ENCODE measurements at regions of chr1 and their contacts with region 1.

Region 1: DNA sequence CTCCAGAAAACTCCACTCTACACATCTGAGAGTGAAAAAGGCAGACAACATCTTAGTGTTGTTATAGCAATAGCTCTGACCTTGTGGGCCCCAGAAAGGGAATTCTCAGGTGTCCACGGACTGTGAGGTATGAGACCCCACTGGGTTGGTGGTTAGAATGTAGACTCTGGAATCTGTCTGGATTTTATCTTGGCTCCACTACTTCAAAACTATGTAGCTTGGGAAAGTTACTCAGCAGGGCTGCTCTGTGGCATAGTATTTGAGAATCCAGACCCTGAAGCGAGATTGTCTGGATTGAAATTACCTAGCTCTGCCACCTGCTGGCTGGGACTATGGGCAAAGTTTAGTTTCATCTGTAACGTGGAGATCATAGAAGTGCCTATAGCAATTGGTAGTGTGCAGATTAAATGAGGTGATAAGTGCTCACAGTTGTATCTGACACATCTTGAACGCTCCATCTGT is 25.8 kb downstream of the PRDM2 start:
- DNase-seq: peak in 7 of 9 donors; percentile 51 to 74 (median 66)
- ATAC-seq: peak; percentile 67
- H3K4me3 ChIP-seq: no peak overlapping the region
- H3K4me3 Mint-ChIP-seq: no peak overlapping the region
- H3K27ac ChIP-seq: peak overlapping the region; percentile 41
- H3K27ac Mint-ChIP-seq: peak overlapping the region; percentile 17 to 87 (median 34)
- H3K4me1 ChIP-seq: peaks cover 18 to 31% of the 10 kb centered on the region in 2 donors
- H3K4me1 Mint-ChIP-seq: peaks cover 28 to 93% (median 63%) of the 10 kb centered on the region in 7 donors
- H3K27me3 ChIP-seq: no peaks in the 10 kb centered on the region
- H3K27me3 Mint-ChIP-seq: no peaks in the 10 kb centered on the region

Region 2: DNA sequence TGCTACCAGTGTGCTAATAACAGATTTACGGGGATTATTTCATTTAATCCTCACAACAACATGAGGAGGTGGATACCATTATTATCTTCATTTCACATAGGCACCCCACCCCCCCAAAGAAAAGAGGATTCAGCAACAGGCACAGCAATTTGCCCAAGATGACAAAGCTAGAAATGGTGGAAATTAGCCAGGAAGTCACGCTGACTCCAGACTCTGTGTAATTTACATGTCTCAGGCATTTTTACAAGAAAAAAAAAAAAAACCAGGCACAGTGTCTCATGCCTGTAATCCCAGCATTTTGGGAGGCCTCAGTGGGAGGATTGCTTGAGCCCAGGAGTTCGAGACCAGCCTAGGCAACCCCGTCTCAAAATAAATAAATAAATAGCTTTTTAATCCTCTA is 63.3 kb before region 1 on chr1:
- CTCF ChIA-PET with region 1: interaction called, 39 read pairs
- POLR2A ChIA-PET with region 1: interaction called, 5 read pairs
- intact Hi-C with region 1: loop called (anchors 1 kb)
- DNase-seq: no peak
- ATAC-seq: no peak
- H3K4me3 ChIP-seq: no peak overlapping the region
- H3K4me3 Mint-ChIP-seq: no peak overlapping the region
- H3K27ac ChIP-seq: no peak overlapping the region
- H3K27ac Mint-ChIP-seq: no peak overlapping the region
- H3K4me1 ChIP-seq: no peaks in the 10 kb centered on the region
- H3K4me1 Mint-ChIP-seq: peaks cover 0 to 8% (median 0%) of the 10 kb centered on the region in 7 donors
- H3K27me3 ChIP-seq: no peaks in the 10 kb centered on the region
- H3K27me3 Mint-ChIP-seq: peaks cover 0 to 8% (median 0%) of the 10 kb centered on the region in 5 donors

Region 3: GRCh38 chr1:13699936-13700520 is 25.7 kb before region 1 on chr1 and contains the start of gene PRDM2:
- CTCF ChIA-PET with region 1: interaction called, 15 read pairs
- POLR2A ChIA-PET with region 1: interaction called, 16 read pairs
- intact Hi-C with region 1: loop called in 1 of 2 experiments (anchors 1 kb)
- DNase-seq: peak; percentile 53 to 76 (median 69)
- ATAC-seq: peak; percentile 67
- H3K4me3 ChIP-seq: peak within 1 kb of the TSS; percentile 90
- H3K4me3 Mint-ChIP-seq: peak within 1 kb of the TSS; percentile 93 to 100 (median 98)
- H3K27ac ChIP-seq: peak within 1 kb of the TSS; percentile 96
- H3K27ac Mint-ChIP-seq: peak within 1 kb of the TSS; percentile 95 to 99 (median 98)
- H3K4me1 ChIP-seq: peaks cover 27% of the 10 kb centered on the region in 2 donors
- H3K4me1 Mint-ChIP-seq: peaks cover 31 to 66% (median 53%) of the 10 kb centered on the region in 7 donors
- H3K27me3 ChIP-seq: no peaks in the 10 kb centered on the region
- H3K27me3 Mint-ChIP-seq: peaks cover 0 to 9% (median 0%) of the 10 kb centered on the region in 5 donors
- total RNA-seq, gene PRDM2: 58.3 to 142 (median 127) TPM

Region 4: GRCh38 chr1:13737398-13737797 is 11.7 kb after region 1 on chr1:
- CTCF ChIA-PET with region 1: interaction called, 3 read pairs
- POLR2A ChIA-PET with region 1: interaction called, 29 read pairs
- intact Hi-C with region 1: no loop called
- DNase-seq: no peak
- ATAC-seq: peak; percentile 30
- H3K4me3 ChIP-seq: no peak overlapping the region
- H3K4me3 Mint-ChIP-seq: peak overlapping the region in 1 of 10 donors; percentile 10
- H3K27ac ChIP-seq: peak overlapping the region; percentile 16
- H3K27ac Mint-ChIP-seq: peak overlapping the region in 8 of 9 donors; percentile 66 to 84 (median 74)
- H3K4me1 ChIP-seq: peaks cover 28 to 31% of the 10 kb centered on the region in 2 donors
- H3K4me1 Mint-ChIP-seq: peaks cover 37 to 66% (median 63%) of the 10 kb centered on the region in 7 donors
- H3K27me3 ChIP-seq: no peaks in the 10 kb centered on the region
- H3K27me3 Mint-ChIP-seq: no peaks in the 10 kb centered on the region

Region 5: DNA sequence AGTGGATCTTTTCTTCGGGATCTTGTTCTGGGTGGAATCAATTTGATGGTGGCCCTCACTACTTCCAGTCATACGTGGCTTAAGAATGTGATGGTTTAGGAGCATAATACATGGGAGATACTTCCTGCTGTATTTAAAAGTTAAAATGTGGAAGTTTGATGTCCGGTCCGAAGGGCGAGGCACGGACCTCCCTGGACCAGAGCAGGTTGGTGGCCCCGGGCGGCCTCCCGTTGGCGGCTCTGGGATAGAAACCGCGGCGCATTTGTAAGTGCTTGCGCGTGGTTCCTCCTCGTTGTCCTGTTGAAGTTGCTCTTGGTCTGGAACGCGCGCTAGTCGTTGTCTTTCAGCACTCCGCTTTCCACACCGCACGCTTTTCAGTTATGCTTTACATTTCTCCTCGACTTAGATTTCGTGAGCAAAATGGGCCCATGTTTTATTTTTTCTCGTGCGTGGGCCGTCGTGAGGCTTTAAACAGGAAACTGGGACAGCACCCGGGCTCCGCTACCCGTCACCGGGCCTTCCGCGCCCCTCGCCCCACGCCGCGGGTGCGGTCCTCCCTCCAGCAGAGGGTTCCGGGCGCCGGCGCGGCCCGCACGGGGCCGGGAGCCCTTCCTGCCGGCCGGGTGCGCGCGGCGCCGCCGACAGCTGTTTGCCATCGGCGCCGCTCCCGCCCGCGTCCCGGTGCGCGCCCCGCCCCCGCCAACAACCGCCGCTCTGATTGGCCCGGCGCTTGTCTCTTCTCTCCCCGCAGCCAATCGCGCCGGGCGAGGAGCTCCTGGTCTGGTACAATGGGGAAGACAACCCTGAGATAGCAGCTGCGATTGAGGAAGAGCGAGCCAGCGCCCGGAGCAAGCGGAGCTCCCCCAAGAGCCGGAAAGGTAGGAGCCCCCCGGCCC is 23.1 kb after region 1 on chr1:
- CTCF ChIA-PET with region 1: interaction called, 6 read pairs
- POLR2A ChIA-PET with region 1: interaction called, 206 read pairs
- intact Hi-C with region 1: no loop called
- DNase-seq: peak; percentile 94 to 97 (median 96)
- ATAC-seq: peak; percentile 95
- H3K4me3 ChIP-seq: peak overlapping the region; percentile 78
- H3K4me3 Mint-ChIP-seq: peak overlapping the region; percentile 90 to 98 (median 94)
- H3K27ac ChIP-seq: peak overlapping the region; percentile 83
- H3K27ac Mint-ChIP-seq: peak overlapping the region; percentile 91 to 97 (median 96)
- H3K4me1 ChIP-seq: peaks cover 36 to 43% of the 10 kb centered on the region in 2 donors
- H3K4me1 Mint-ChIP-seq: peaks cover 31 to 67% (median 54%) of the 10 kb centered on the region in 7 donors
- H3K27me3 ChIP-seq: no peaks in the 10 kb centered on the region
- H3K27me3 Mint-ChIP-seq: no peaks in the 10 kb centered on the region

Region 6: GRCh38 chr1:13781907-13782644 is 56.3 kb after region 1 on chr1:
- CTCF ChIA-PET with region 1: no interaction called
- POLR2A ChIA-PET with region 1: no interaction called
- intact Hi-C with region 1: no loop called
- DNase-seq: no peak
- ATAC-seq: no peak
- H3K4me3 ChIP-seq: no peak overlapping the region
- H3K4me3 Mint-ChIP-seq: no peak overlapping the region
- H3K27ac ChIP-seq: no peak overlapping the region
- H3K27ac Mint-ChIP-seq: peak overlapping the region in 8 of 9 donors; percentile 34 to 83 (median 67)
- H3K4me1 ChIP-seq: no peaks in the 10 kb centered on the region
- H3K4me1 Mint-ChIP-seq: peaks cover 36 to 81% (median 74%) of the 10 kb centered on the region in 7 donors
- H3K27me3 ChIP-seq: no peaks in the 10 kb centered on the region
- H3K27me3 Mint-ChIP-seq: no peaks in the 10 kb centered on the region

Region 7: DNA sequence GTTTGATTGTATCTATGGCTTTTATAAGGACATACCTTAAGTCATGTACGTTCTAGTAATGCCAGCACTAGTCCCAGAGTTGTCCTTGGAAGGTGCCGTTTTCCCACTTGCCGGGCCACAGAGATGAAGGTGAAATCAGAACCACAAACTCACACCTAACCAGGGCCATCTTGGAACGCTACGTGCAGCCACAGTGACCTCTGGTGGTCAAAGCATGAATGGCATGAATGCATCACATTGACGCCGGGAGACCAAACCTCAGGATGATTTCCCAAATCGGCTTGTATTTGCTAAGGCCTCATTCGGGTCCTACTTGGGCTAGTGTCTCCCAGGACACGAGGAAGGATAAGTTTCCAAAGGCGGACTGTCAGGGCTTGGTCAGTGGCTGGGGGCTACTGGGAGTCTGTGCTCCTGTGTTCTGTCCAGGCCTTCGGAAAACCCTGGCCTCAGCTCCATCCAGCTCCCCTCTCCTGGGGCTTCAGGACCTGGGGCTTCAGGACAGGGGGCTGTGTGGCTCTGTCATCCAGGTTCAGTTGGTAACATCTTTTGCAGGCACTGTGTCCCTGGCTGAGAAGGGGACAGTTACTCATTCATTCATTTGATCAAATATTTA is 234.7 kb after region 1 on chr1:
- CTCF ChIA-PET with region 1: no interaction called
- POLR2A ChIA-PET with region 1: no interaction called
- intact Hi-C with region 1: loop called in 1 of 2 experiments (anchors 1 kb)
- DNase-seq: peak; percentile 15 to 60 (median 47)
- ATAC-seq: peak; percentile 60
- H3K4me3 ChIP-seq: no peak overlapping the region
- H3K4me3 Mint-ChIP-seq: no peak overlapping the region
- H3K27ac ChIP-seq: no peak overlapping the region
- H3K27ac Mint-ChIP-seq: no peak overlapping the region
- H3K4me1 ChIP-seq: no peaks in the 10 kb centered on the region
- H3K4me1 Mint-ChIP-seq: no peaks in the 10 kb centered on the region
- H3K27me3 ChIP-seq: peaks cover 0 to 2% of the 10 kb centered on the region in 2 donors
- H3K27me3 Mint-ChIP-seq: peaks cover 0 to 55% (median 42%) of the 10 kb centered on the region in 5 donors

Region 8: DNA sequence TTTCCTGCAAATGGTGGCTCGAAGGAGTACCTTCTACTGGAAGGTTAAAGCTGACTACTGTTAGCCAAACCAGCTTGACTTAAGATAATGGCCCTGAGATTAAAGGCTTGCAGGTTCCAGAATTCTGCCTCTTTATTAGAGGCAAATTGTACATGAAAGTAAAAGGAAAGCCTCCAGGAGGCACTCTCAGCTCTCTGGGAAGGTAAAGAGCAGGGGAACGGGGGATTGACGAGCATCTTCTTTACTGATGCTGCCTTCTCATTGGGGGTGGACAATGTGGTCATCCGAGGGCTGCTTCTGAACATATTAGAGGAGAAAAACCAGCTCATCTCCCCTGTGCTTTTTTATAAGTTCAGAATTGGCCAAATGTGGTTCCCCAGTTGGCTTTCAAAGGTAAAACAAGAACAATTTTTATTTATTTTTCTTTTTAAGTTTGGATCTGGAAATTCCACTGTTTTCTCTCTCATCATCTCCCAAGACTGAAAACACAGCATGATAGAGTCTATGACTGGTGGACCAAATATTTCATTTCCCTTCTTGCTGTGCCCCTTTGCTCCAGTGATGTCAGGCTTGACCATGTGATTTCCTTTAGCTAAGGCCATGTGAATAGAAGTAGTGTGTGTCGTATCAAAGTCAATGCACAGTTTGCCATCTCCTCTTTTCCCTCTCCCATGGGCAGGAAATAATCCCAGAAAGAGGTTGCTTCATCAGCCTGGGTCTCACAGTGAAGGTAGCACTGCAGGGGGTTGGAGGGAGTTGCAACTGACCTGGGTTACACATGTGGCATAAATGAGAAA is 266.9 kb after region 1 on chr1:
- CTCF ChIA-PET with region 1: no interaction called
- POLR2A ChIA-PET with region 1: no interaction called
- intact Hi-C with region 1: no loop called
- DNase-seq: no peak
- ATAC-seq: no peak
- H3K4me3 ChIP-seq: no peak overlapping the region
- H3K4me3 Mint-ChIP-seq: no peak overlapping the region
- H3K27ac ChIP-seq: no peak overlapping the region
- H3K27ac Mint-ChIP-seq: no peak overlapping the region
- H3K4me1 ChIP-seq: no peaks in the 10 kb centered on the region
- H3K4me1 Mint-ChIP-seq: no peaks in the 10 kb centered on the region
- H3K27me3 ChIP-seq: no peaks in the 10 kb centered on the region
- H3K27me3 Mint-ChIP-seq: peaks cover 2 to 56% (median 44%) of the 10 kb centered on the region in 5 donors

Measured in naive thymus-derived CD4-positive, alpha-beta T cell (primary cell).